HEK293 (cell line): ENCODE measurements at regions of chr6 and their contacts with region 1.

Region 1: DNA sequence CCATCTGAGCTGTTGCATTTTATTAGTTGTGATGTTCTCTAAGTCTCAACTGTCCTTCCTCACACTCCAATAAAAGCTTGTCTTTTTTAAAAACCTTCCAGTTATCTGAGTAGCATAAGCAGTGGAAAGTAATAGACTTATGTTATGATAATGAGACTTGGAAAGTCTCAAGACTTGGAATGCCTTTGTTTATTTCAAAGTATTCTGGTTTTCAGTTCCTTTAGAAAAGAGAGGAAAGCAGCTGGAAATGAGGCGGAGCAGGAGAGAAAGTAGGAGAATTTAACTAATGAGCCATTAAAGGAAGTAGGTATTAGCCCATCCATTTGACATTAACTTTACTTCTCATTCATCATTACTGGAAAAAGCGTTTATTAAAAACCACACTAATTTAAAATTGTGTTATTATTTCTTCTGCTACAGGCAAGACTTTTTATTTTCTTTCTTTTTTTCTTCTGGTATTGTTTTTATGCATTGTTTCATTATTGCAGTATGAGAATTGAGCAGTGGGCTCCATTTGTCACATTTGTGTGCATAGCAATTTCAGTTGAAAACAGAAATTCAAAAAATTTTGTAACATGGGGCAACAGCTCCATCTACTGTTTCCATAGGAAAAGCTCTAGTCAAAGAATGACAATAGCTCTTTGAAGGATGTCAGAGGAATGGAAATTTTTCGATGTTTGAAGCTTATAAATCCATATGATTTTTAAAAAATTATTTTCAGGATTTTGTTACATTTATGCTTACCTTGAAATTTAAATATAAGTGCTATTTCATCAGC is 194.8 kb downstream of the COL9A1 start:
- H3K4me3 ChIP-seq: no peak overlapping the region
- H3K27ac ChIP-seq: no peak overlapping the region
- H3K4me1 ChIP-seq: no peaks in the 10 kb centered on the region
- CTCF ChIP-seq: no peak

Region 2: DNA sequence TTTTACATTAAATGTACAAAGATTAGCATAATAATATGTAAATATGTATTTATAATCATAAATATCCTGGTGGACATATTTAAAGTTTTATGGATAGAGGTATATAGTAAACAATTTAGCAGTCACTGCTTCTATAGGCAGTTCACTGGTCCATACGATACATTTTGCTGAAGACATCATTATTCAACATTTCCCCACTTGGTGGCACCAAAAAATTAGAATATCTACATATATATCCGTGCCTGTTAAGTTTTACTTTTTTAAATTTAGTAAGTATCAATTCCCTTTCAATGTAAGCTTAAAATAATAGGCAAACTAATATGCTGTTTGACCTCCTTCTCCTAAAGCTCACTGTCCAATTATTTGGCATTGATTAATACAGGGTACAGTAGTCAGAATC is 375.4 kb before region 1 on chr6:
- CTCF ChIA-PET with region 1: interaction called, 49 read pairs
- POLR2A ChIA-PET with region 1: no interaction called
- H3K4me3 ChIP-seq: no peak overlapping the region
- H3K27ac ChIP-seq: no peak overlapping the region
- H3K4me1 ChIP-seq: no peaks in the 10 kb centered on the region
- CTCF ChIP-seq: no peak

Region 3: GRCh38 chr6:69917834-69918233 is 190.2 kb before region 1 on chr6:
- CTCF ChIA-PET with region 1: interaction called, 14 read pairs
- POLR2A ChIA-PET with region 1: no interaction called
- H3K4me3 ChIP-seq: no peak overlapping the region
- H3K27ac ChIP-seq: no peak overlapping the region
- H3K4me1 ChIP-seq: peaks cover 3% of the 10 kb centered on the region; the same call in 1 of the 2 replicates
- CTCF ChIP-seq: no peak

Region 4: DNA sequence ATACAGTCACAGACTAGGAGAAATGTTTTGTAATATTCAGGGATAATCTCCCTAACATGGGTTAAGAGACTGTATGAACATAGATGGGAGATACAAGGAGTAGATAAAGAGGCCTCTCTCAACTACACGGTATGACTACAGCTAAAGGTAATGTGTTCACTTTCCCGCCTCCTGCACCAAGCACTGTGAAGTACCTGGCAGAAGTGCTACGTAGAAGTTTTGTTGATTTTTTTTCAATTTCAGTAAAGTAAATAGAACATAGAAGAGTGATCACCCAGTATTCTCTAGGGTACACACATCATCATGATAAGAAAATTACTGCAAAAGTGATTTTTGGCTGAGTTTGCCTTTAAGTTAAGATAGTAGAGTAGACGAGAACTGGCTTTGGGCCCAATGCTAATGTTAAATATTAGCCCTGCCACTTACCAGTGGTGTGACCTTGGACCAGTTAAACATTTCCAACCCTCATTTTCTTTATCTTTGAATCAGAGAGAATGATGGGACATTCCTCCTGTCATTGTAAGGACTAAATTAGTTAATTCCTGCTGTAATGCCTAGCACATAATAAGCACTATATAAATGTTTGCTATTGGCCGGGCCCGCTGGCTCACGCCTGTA is 11.3 kb after region 1 on chr6:
- CTCF ChIA-PET with region 1: interaction called, 27 read pairs
- POLR2A ChIA-PET with region 1: no interaction called
- H3K4me3 ChIP-seq: no peak overlapping the region
- H3K27ac ChIP-seq: no peak overlapping the region
- H3K4me1 ChIP-seq: no peaks in the 10 kb centered on the region
- CTCF ChIP-seq: no peak

Region 5: DNA sequence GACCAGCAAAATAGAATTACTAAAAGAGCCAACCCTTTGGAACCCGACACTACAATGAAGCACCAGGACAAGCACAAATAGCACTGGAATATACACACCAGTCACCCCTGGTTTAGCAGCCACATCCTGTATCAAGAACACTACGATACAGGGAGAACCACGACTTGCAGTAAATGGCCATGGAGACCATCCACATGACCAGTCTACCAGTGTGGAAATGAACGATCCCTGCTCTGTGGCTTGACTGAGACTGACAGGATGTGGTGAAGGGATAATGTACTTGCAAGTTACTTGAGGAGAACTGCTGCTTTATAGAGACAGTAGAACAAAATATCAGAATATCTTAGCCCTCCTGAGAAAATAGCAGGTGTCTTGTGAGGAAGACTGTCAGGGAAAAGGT is 25.2 kb after region 1 on chr6:
- CTCF ChIA-PET with region 1: interaction called, 12 read pairs
- POLR2A ChIA-PET with region 1: no interaction called
- H3K4me3 ChIP-seq: no peak overlapping the region
- H3K27ac ChIP-seq: no peak overlapping the region
- H3K4me1 ChIP-seq: no peaks in the 10 kb centered on the region
- CTCF ChIP-seq: no peak